Head of caudate nucleus (tissue), 42 donors: ENCODE measurements at regions of chr1 and their contacts with region 1.

Region 1: DNA sequence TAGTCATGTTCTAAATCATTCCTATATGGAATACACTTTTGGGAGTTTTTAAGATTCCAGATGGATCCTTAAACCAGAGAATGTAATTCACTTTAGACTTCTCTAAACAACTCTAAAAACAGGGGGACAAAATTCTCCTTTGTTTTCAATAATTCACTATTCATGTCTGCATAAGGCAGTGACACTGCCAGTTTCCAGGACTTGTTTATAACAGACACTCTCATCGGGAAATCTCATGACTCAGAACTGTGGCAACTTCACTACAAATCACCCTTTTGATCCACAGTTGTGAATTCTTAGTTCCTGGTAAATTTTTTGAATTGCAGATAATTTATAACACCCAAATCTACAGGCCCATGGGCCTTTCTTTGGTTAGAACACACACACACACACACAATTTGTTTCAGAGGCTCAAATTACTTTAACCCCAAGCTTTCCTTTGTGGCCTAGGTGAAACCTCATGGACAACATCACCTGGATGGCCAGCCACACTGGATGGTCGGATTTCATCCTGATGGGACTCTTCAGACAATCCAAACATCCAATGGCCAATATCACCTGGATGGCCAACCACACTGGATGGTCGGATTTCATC is at the start of gene OR2T4:
- DNase-seq: peak in 12 of 42 donors; percentile 6 to 68 (median 39)

Region 2: DNA sequence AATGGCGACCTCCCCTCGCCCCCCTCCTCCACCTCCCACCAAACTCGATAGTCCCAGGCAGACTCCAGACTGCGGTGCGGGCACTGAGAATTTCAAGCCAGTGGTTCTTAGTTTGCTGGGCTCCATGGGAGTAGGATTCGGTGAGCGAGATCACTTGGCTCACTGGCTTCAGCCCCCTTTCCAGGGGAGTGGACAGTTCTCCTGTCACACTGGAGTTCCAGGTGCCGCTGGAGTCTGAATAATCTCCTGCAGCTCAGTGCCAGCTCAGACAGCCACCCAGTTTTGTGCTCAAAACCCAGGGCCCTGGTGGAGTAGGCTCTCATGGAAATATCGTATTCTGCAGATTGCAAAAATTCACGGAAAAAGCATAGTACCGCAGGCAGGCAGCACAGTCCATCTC is 44.4 kb before region 1 on chr1:
- intact Hi-C with region 1: loop called (anchors 10 kb)
- DNase-seq: no peak

Region 3: DNA sequence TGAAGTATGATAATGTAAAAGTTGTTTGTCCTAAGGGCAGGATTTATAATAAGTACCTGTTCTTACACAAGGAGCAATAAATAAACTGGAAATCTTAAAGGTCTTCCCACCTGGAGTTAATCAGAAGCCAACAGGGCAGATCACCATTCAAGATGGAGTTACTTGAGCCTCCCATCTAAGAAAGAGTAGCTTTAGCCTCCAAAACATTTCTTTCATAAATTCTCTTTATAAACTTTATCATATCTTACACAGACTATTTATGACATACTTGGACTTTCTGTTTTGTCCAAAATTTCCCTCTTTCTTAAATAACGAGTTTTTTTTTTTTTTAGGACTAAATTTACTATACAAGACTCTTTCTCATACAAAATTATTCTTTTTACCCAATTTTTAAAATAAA is 60.2 kb after region 1 on chr1:
- intact Hi-C with region 1: no loop called
- DNase-seq: no peak